ENCODE measurements at regions of chr10 and their contacts with region 1.

Region 1: DNA sequence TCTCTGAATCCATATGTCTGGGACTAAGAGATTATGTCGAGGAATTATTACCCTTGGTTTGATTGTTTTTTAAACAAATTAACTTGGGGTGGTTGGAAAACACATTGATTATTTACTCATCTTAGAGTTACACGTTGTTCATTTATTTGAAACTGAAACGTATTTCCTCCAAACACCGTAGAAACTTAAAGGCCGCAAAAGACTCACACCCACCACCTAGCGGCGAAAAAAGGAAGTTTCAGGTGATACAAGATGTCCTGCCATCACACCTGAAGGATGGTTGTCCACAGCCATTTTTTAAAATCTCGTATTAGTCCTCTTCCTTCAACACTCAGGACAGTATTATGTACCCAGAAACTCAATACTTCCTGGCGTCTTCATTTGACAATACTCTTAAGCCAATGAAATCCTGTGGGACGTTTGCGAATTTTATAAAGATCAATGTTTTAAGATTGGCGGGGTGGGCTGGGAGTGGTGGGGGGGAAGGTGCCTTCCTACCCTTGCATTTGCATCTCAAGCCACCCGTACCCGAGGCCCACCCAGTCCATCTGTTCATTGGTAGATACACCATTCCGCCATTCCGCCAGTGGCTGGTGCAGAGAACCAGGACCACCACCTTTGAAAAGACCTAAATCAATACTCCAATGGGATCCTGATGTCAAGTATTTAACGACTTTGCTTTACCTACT is 1.4 kb upstream of the LCOR start:
- DNase-seq: peak; percentile 88
- H3K4me3 Mint-ChIP-seq: peak overlapping the region; percentile 59
- H3K27ac Mint-ChIP-seq: peak overlapping the region; percentile 91
- H3K4me1 Mint-ChIP-seq: peaks cover 38% of the 10 kb centered on the region
- H3K27me3 Mint-ChIP-seq: peaks cover 13% of the 10 kb centered on the region

Region 2: GRCh38 chr10:96642973-96643372 is 187.7 kb before region 1 on chr10:
- CTCF ChIA-PET with region 1: interaction called, 19 read pairs
- DNase-seq: peak; percentile 77
- H3K4me3 Mint-ChIP-seq: no peak overlapping the region
- H3K27ac Mint-ChIP-seq: no peak overlapping the region
- H3K4me1 Mint-ChIP-seq: peaks cover 9% of the 10 kb centered on the region
- H3K27me3 Mint-ChIP-seq: peaks cover 26% of the 10 kb centered on the region

Region 3: DNA sequence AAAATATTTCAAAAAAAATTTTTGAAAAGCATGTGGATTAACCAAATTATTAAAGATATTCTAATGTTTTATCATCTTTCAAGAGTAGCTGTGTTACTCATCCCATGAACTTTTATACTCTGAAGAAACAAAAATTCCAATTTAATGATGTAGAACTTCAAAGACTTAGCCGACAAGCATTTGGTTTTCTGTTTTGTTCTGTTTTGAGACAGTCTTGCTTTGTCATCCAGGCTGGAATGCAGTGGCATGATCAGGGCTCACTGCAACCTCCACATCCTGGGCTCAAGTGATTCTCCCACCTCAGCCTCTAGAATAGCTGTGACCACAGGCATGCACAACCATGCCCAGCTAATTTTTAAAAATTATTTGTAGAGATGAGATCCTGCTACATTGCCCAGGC is 16.4 kb before region 1 on chr10:
- CTCF ChIA-PET with region 1: no interaction called
- DNase-seq: no peak
- H3K4me3 Mint-ChIP-seq: no peak overlapping the region
- H3K27ac Mint-ChIP-seq: no peak overlapping the region
- H3K4me1 Mint-ChIP-seq: no peaks in the 10 kb centered on the region
- H3K27me3 Mint-ChIP-seq: peaks cover 13% of the 10 kb centered on the region

Region 4: DNA sequence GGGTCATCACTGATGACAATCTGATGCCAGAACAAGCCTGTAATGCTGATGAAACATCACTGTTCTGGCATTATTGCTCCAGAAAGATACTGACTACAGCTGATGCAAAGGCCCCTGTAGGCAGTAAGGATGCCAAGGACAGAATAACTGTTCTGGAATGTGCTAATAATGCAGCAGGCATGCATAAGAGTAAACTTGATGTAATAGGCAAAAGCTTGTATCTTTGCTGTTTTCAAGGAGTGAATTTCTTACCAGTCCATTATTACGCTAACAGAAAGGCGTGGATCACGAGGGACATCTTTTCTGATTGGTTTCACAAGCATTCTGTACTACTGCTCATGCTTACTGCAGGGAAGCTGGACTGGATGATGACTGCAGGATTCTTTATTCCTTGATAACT is 20.2 kb after region 1 on chr10:
- CTCF ChIA-PET with region 1: no interaction called
- DNase-seq: no peak
- H3K4me3 Mint-ChIP-seq: no peak overlapping the region
- H3K27ac Mint-ChIP-seq: no peak overlapping the region
- H3K4me1 Mint-ChIP-seq: no peaks in the 10 kb centered on the region
- H3K27me3 Mint-ChIP-seq: no peaks in the 10 kb centered on the region

Region 5: GRCh38 chr10:96890172-96890513 is 59.5 kb after region 1 on chr10:
- CTCF ChIA-PET with region 1: no interaction called
- DNase-seq: no peak
- H3K4me3 Mint-ChIP-seq: no peak overlapping the region
- H3K27ac Mint-ChIP-seq: no peak overlapping the region
- H3K4me1 Mint-ChIP-seq: peaks cover 20% of the 10 kb centered on the region
- H3K27me3 Mint-ChIP-seq: no peaks in the 10 kb centered on the region